ENCODE measurements at regions of chr4 and their contacts with region 1.

Region 1: GRCh38 chr4:99088481-99089365 is at the start of gene ADH5:
- DNase-seq: peak; percentile 95
- ATAC-seq: peak; percentile 97
- H3K4me3 Mint-ChIP-seq: peak within 1 kb of the TSS; percentile 93
- H3K27ac Mint-ChIP-seq: peak within 1 kb of the TSS; percentile 93
- H3K4me1 Mint-ChIP-seq: peaks cover 27% of the 10 kb centered on the region
- H3K27me3 Mint-ChIP-seq: no peaks in the 10 kb centered on the region
- CTCF ChIP-seq: no peak
- total RNA-seq, gene ADH5: 114 to 118 TPM

Region 2: GRCh38 chr4:98928505-98929340 is 160.0 kb before region 1 on chr4 and contains the start of gene EIF4E:
- CTCF ChIA-PET with region 1: no interaction called
- POLR2A ChIA-PET with region 1: interaction called, 10 read pairs
- intact Hi-C with region 1: no loop called
- DNase-seq: peak; percentile 98
- ATAC-seq: peak; percentile 78
- H3K4me3 Mint-ChIP-seq: peak within 1 kb of the TSS; percentile 88
- H3K27ac Mint-ChIP-seq: peak within 1 kb of the TSS; percentile 95
- H3K4me1 Mint-ChIP-seq: peaks cover 36% of the 10 kb centered on the region
- H3K27me3 Mint-ChIP-seq: no peaks in the 10 kb centered on the region
- CTCF ChIP-seq: peak; percentile 48
- total RNA-seq, gene EIF4E: 118 to 121 TPM

Measured in activated CD8-positive, alpha-beta T cell treated with anti-CD3 and anti-CD28 coated beads for 36 hours (primary cell).